ENCODE measurements at regions of chr16 and their contacts with region 1.

Region 1: DNA sequence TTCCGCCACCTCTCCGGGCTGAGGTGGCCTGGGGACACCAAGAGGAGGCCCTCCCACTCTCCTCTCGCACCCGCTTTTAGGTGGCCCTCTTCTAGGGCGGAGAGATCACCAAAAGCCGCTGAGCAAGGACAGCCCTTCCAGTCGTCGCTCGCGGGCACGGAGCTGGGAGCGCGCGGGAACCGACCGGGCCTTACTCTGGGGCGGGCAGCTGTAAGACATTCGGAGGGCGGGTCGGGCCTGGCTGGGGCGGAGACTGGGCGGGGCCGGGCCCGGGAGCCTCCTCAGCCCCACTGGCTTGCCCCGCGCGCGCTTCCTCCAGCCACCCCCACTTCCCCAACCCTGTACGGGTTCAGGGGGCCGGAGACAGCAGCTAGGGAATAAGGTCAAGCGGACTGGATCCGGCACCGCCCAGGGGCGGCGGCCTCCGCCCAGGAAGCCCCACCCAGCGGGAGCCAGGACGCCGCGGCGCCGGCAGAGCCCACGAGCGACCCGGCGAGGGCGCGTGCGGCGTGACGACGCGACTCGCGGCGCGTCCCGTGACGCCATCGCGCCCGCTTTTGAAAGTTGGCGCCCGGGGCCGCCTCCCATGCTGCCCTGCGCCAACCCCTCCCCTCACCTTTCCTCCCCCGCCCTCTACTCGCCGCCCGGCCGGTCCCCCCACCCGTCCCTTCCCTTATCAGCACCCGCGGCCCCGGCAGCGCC is 351 bp upstream of the CTCF start:
- DNase-seq: peak; percentile 80 to 96
- ATAC-seq: peak; percentile 87 to 96
- H3K4me3 ChIP-seq: peak overlapping the region; percentile 87
- H3K27ac ChIP-seq: peak overlapping the region; percentile 99 to 100
- H3K4me1 ChIP-seq: peaks cover 17% of the 10 kb centered on the region
- CTCF ChIP-seq: no peak
- EP300 ChIP-seq: no peak
- POLR2A ChIP-seq: peak; percentile 78
- RAD21 ChIP-seq: no peak

Region 2: GRCh38 chr16:67514382-67514828 is 47.6 kb before region 1 on chr16:
- CTCF ChIA-PET with region 1: interaction called, 57 read pairs
- POLR2A ChIA-PET with region 1: no interaction called
- DNase-seq: peak; percentile 69 to 89
- ATAC-seq: peak; percentile 82 to 86
- H3K4me3 ChIP-seq: no peak overlapping the region
- H3K27ac ChIP-seq: peak overlapping the region; percentile 15 to 43; a peak in 4 of 6 replicates
- H3K4me1 ChIP-seq: peaks cover 30% of the 10 kb centered on the region
- CTCF ChIP-seq: peak; percentile 79
- EP300 ChIP-seq: no peak
- POLR2A ChIP-seq: no peak
- RAD21 ChIP-seq: peak; percentile 71

Region 3: GRCh38 chr16:67546761-67547422 is 15.1 kb before region 1 on chr16:
- CTCF ChIA-PET with region 1: interaction called, 80 read pairs
- POLR2A ChIA-PET with region 1: interaction called, 10 read pairs
- DNase-seq: peak; percentile 73 to 85
- ATAC-seq: peak; percentile 74 to 84
- H3K4me3 ChIP-seq: no peak overlapping the region
- H3K27ac ChIP-seq: 0 out of 6 replicates have a peak overlapping the region, but pooled peaks of 1 of the 2 experiments have one; percentile 14
- H3K4me1 ChIP-seq: peaks cover under 1% of the 10 kb centered on the region; the same call in 1 of the 3 replicates
- CTCF ChIP-seq: peak; percentile 93
- EP300 ChIP-seq: no peak
- POLR2A ChIP-seq: no peak
- RAD21 ChIP-seq: peak; percentile 81 to 85

Region 4: GRCh38 chr16:67595033-67595355 is 33.0 kb after region 1 on chr16:
- CTCF ChIA-PET with region 1: interaction called, 13 read pairs
- POLR2A ChIA-PET with region 1: interaction called, 7 read pairs
- DNase-seq: no peak
- ATAC-seq: peak; percentile 50 to 54; a peak in 3 of 6 replicates
- H3K4me3 ChIP-seq: no peak overlapping the region
- H3K27ac ChIP-seq: no peak overlapping the region; a peak in 1 of 6 replicates
- H3K4me1 ChIP-seq: peaks cover 9% of the 10 kb centered on the region; the same call in 1 of the 3 replicates
- CTCF ChIP-seq: no peak
- EP300 ChIP-seq: no peak
- POLR2A ChIP-seq: no peak
- RAD21 ChIP-seq: no peak

Region 5: GRCh38 chr16:67641779-67642708 is 80.1 kb after region 1 on chr16:
- CTCF ChIA-PET with region 1: interaction called, 45 read pairs
- POLR2A ChIA-PET with region 1: interaction called, 4 read pairs
- DNase-seq: no peak
- ATAC-seq: peak; percentile 20 to 22; a peak in 2 of 6 replicates
- H3K4me3 ChIP-seq: no peak overlapping the region
- H3K27ac ChIP-seq: no peak overlapping the region
- H3K4me1 ChIP-seq: 0 out of 3 replicates have a peak, but pooled peaks cover 3% of the 10 kb centered on the region
- CTCF ChIP-seq: no peak
- EP300 ChIP-seq: no peak
- POLR2A ChIP-seq: no peak
- RAD21 ChIP-seq: no peak

Region 6: DNA sequence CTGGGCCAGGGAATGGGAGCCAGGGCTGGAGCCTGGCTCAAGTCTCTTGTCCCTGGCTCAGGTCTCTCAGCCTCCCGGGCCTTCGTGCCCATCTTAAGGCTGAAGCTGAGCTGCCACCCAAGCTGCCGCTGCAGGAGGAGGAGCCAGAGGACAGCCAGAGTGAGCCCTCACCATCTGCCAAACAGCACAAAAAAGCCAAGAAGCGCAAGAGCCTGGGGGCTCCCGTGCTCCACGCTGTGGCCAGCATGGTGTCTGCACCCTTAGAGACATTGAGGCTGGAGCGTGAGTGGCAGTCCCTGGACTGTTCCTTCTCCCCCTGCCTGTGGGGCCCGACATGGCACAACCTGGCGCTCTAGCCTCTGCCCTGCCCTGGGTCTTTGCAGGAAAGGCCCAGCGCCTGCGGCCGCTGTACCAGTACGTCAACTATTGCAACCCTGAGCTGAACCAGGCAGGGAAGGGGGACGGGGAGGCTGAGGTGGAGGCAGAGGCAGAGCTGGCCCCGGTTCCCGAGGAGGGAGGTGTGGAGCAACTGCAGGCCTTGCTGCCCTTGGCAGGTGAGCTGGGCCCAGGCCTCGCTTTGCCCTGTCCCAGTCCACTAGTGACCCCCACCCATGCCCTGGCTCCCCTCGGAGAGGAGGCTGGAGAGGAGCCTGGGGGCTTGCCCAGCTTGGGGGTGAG is 106.0 kb after region 1 on chr16:
- CTCF ChIA-PET with region 1: interaction called, 22 read pairs
- POLR2A ChIA-PET with region 1: no interaction called
- DNase-seq: peak; percentile 93 to 98
- ATAC-seq: peak; percentile 86 to 92
- H3K4me3 ChIP-seq: no peak overlapping the region
- H3K27ac ChIP-seq: peak overlapping the region in 1 of 2 experiments; percentile 55; a peak in 3 of 6 replicates
- H3K4me1 ChIP-seq: peaks cover 17% of the 10 kb centered on the region
- CTCF ChIP-seq: peak; percentile 69
- EP300 ChIP-seq: no peak
- POLR2A ChIP-seq: no peak
- RAD21 ChIP-seq: peak; percentile 57 to 65

Region 7: DNA sequence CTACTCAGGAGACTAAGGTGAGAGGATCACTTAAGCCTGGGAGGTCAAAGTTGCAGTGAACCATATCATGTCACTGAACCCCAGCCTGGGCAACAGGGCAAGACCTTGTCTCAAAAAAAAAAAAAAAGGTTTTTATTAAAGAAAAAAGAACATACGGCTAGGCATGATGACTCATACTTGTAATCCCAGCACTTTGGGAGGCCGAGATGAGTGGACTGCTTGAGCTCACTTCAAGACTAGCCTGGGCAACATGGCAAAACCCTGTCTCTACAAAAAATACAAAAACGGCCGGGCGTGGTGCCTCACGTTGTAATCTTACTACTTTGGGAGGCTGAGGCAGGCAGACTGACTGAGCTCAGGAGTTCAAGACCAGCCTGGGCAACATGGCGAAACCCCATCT is 206.0 kb after region 1 on chr16:
- CTCF ChIA-PET with region 1: no interaction called
- POLR2A ChIA-PET with region 1: no interaction called
- DNase-seq: peak in 1 of 2 experiments; percentile 22
- ATAC-seq: no peak
- H3K4me3 ChIP-seq: no peak overlapping the region
- H3K27ac ChIP-seq: peak overlapping the region in 1 of 2 experiments; percentile 18; a peak in 1 of 6 replicates
- H3K4me1 ChIP-seq: peaks cover 5% of the 10 kb centered on the region; the same call in 2 of the 3 replicates
- CTCF ChIP-seq: no peak
- EP300 ChIP-seq: no peak
- POLR2A ChIP-seq: no peak
- RAD21 ChIP-seq: no peak

Measured in A549 (cell line).